ENCODE measurements at regions of chr6 and their contacts with region 1.

Region 1: GRCh38 chr6:128569737-128570679 is 49.6 kb upstream of the PTPRK start:
- DNase-seq: peak; percentile 80
- H3K4me3 ChIP-seq: no peak overlapping the region
- H3K27me3 ChIP-seq: no peaks in the 10 kb centered on the region
- CTCF ChIP-seq: no peak

Region 2: DNA sequence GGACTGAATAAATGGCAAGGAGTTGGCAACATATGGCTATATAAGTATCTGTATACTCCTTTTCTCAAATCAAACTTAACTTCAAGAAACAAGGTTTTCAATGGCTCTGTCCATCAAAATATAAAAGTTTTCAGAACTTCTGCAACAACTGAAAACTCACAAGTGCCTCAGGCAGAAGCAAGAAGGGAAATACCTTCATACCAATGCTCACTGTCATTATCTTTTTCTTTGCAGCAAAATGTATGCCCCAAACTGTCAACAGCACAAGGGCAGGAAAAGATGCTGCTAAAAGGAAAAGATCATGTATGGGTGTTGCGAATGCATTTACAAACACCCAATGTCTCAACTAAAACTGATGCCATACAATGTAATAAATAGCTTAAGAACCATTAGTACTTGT is 95.5 kb before region 1 on chr6:
- CTCF ChIA-PET with region 1: no interaction called
- POLR2A ChIA-PET with region 1: interaction called, 11 read pairs
- DNase-seq: peak; percentile 9
- H3K4me3 ChIP-seq: no peak overlapping the region
- H3K27me3 ChIP-seq: no peaks in the 10 kb centered on the region
- CTCF ChIP-seq: no peak

Region 3: GRCh38 chr6:128520436-128521281 is 49.3 kb before region 1 on chr6 and contains the start of gene PTPRK:
- CTCF ChIA-PET with region 1: no interaction called
- POLR2A ChIA-PET with region 1: interaction called, 10 read pairs
- DNase-seq: peak; percentile 59
- H3K4me3 ChIP-seq: peak within 1 kb of the TSS; percentile 70
- H3K27me3 ChIP-seq: no peaks in the 10 kb centered on the region
- CTCF ChIP-seq: no peak
- polyA plus RNA-seq, gene PTPRK: 18.5 and 31.4 TPM in 2 replicates

Region 4: GRCh38 chr6:128993166-128993565 is 423.2 kb after region 1 on chr6:
- CTCF ChIA-PET with region 1: no interaction called
- POLR2A ChIA-PET with region 1: no interaction called
- DNase-seq: no peak
- H3K4me3 ChIP-seq: no peak overlapping the region
- H3K27me3 ChIP-seq: no peaks in the 10 kb centered on the region
- CTCF ChIP-seq: no peak